CD4-positive, alpha-beta memory T cell (primary cell): ENCODE measurements at regions of chr6 and their contacts with region 1.

Region 1: GRCh38 chr6:154247119-154247861 is 109.3 kb downstream of the IPCEF1 start:
- DNase-seq: peak; percentile 50 to 64 (median 58)
- H3K4me3 ChIP-seq: peak overlapping the region; percentile 69 to 75
- H3K4me3 Mint-ChIP-seq: peak overlapping the region; percentile 89 to 99 (median 96)
- H3K27ac ChIP-seq: peak overlapping the region; percentile 87
- H3K27ac Mint-ChIP-seq: peak overlapping the region; percentile 89 to 97 (median 94)
- H3K4me1 ChIP-seq: peaks cover 75% of the 10 kb centered on the region
- H3K4me1 Mint-ChIP-seq: peaks cover 55 to 95% (median 74%) of the 10 kb centered on the region in 4 donors
- H3K27me3 ChIP-seq: no peaks in the 10 kb centered on the region
- H3K27me3 Mint-ChIP-seq: no peaks in the 10 kb centered on the region

Region 2: DNA sequence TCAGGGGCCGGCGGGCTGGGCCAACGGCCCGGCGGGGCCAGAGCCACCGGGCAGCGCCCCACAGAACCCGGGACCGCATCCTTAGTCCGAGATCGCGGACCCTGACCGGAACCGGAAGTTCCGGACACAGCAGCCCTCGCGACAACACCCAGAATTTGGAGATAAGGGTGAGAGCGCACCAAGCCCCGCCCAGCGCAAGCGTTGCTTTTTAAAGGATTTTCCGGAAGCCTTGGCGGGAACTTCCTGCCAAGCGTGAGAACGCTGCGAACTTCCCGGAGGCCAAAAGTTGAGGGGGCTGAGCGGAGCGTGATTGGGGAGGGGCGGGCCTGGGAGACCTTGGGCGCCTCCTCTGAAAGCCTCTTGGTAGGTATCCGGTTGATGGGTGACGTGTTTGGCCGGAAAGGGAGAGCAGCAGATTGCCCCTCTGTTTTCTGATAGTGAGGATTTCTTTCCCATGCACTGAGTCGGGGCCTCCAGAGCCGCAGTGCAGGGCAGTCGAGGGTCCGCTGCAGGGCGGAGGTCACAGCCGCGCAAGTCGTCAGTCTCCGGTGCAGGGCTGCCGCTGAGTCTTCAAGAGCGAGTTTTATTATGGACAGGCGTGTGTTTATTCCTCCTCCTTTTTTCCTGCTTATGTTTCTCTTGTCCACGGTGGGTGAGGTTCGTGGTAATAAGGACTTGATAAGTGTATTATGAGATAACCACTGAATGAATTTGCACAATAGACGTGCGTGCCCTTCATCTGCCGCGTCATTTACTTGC is 1244.5 kb before region 1 on chr6 and contains the start of gene MTRF1L:
- CTCF ChIA-PET with region 1: no interaction called
- POLR2A ChIA-PET with region 1: no interaction called
- intact Hi-C with region 1: loop called (anchors 10 kb)
- DNase-seq: peak; percentile 73 to 89 (median 77)
- H3K4me3 ChIP-seq: peak within 1 kb of the TSS; percentile 89 to 92
- H3K4me3 Mint-ChIP-seq: peak within 1 kb of the TSS; percentile 94 to 98 (median 96)
- H3K27ac ChIP-seq: peak within 1 kb of the TSS; percentile 82
- H3K27ac Mint-ChIP-seq: peak within 1 kb of the TSS; percentile 82 to 97 (median 94)
- H3K4me1 ChIP-seq: peaks cover 43% of the 10 kb centered on the region
- H3K4me1 Mint-ChIP-seq: peaks cover 34 to 48% (median 41%) of the 10 kb centered on the region in 4 donors
- H3K27me3 ChIP-seq: no peaks in the 10 kb centered on the region
- H3K27me3 Mint-ChIP-seq: no peaks in the 10 kb centered on the region
- total RNA-seq, gene MTRF1L: 17.3 to 18.3 TPM

Region 3: GRCh38 chr6:154156135-154156896 is 91.0 kb before region 1 on chr6:
- CTCF ChIA-PET with region 1: interaction called, 15 read pairs
- POLR2A ChIA-PET with region 1: interaction called, 31 read pairs
- intact Hi-C with region 1: loop called (anchors 1 kb)
- DNase-seq: peak; percentile 48 to 76 (median 56)
- H3K4me3 ChIP-seq: peak overlapping the region; percentile 32 to 46
- H3K4me3 Mint-ChIP-seq: peak overlapping the region; percentile 67 to 92 (median 84)
- H3K27ac ChIP-seq: peak overlapping the region; percentile 72
- H3K27ac Mint-ChIP-seq: peak overlapping the region; percentile 84 to 94 (median 93)
- H3K4me1 ChIP-seq: peaks cover 45% of the 10 kb centered on the region
- H3K4me1 Mint-ChIP-seq: peaks cover 38 to 66% (median 49%) of the 10 kb centered on the region in 4 donors
- H3K27me3 ChIP-seq: no peaks in the 10 kb centered on the region
- H3K27me3 Mint-ChIP-seq: no peaks in the 10 kb centered on the region

Region 4: GRCh38 chr6:154218301-154218700 is 29.0 kb before region 1 on chr6:
- CTCF ChIA-PET with region 1: interaction called, 3 read pairs
- POLR2A ChIA-PET with region 1: interaction called, 14 read pairs
- intact Hi-C with region 1: loop called (anchors 5 kb)
- DNase-seq: no peak
- H3K4me3 ChIP-seq: no peak overlapping the region
- H3K4me3 Mint-ChIP-seq: peak overlapping the region in 7 of 8 donors; percentile 25 to 85 (median 57)
- H3K27ac ChIP-seq: no peak overlapping the region
- H3K27ac Mint-ChIP-seq: peak overlapping the region; percentile 53 to 90 (median 81)
- H3K4me1 ChIP-seq: peaks cover 54% of the 10 kb centered on the region
- H3K4me1 Mint-ChIP-seq: peaks cover 38 to 53% (median 41%) of the 10 kb centered on the region in 4 donors
- H3K27me3 ChIP-seq: no peaks in the 10 kb centered on the region
- H3K27me3 Mint-ChIP-seq: no peaks in the 10 kb centered on the region

Region 5: DNA sequence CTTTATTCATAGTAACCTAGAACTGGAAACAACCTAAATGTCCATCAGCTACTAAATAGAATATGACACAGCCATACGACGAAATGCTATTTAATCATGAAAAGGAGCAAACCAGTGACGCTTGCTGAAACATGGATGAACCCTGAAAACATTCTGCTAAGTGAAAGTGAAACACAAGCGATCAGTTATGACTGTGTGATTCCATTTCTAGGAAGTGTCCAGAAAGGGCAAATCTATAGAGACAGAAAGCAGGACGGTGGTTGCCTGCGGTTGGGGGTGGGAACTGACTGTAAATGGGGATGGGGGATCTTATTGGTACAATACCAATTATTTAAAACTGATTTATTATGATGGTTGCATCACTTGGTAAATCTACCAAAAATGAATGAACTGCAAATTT is 17.5 kb before region 1 on chr6:
- CTCF ChIA-PET with region 1: interaction called, 27 read pairs
- POLR2A ChIA-PET with region 1: interaction called, 93 read pairs
- intact Hi-C with region 1: loop called (anchors 1 kb)
- DNase-seq: peak in 4 of 5 donors; percentile 39 to 70 (median 52)
- H3K4me3 ChIP-seq: peak overlapping the region; percentile 52 to 59
- H3K4me3 Mint-ChIP-seq: peak overlapping the region; percentile 86 to 95 (median 90)
- H3K27ac ChIP-seq: peak overlapping the region; percentile 42
- H3K27ac Mint-ChIP-seq: peak overlapping the region; percentile 89 to 96 (median 95)
- H3K4me1 ChIP-seq: peaks cover 75% of the 10 kb centered on the region
- H3K4me1 Mint-ChIP-seq: peaks cover 56 to 85% (median 74%) of the 10 kb centered on the region in 4 donors
- H3K27me3 ChIP-seq: no peaks in the 10 kb centered on the region
- H3K27me3 Mint-ChIP-seq: no peaks in the 10 kb centered on the region

Region 6: GRCh38 chr6:154267508-154268106 is 20.3 kb after region 1 on chr6:
- CTCF ChIA-PET with region 1: interaction called, 113 read pairs
- POLR2A ChIA-PET with region 1: interaction called, 36 read pairs
- intact Hi-C with region 1: loop called (anchors 2 kb)
- DNase-seq: peak in 1 of 5 donors; percentile 16
- H3K4me3 ChIP-seq: no peak overlapping the region
- H3K4me3 Mint-ChIP-seq: peak overlapping the region in 7 of 8 donors; percentile 48 to 74 (median 66)
- H3K27ac ChIP-seq: no peak overlapping the region
- H3K27ac Mint-ChIP-seq: peak overlapping the region in 5 of 7 donors; percentile 27 to 89 (median 58)
- H3K4me1 ChIP-seq: peaks cover 26% of the 10 kb centered on the region
- H3K4me1 Mint-ChIP-seq: peaks cover 17 to 24% (median 20%) of the 10 kb centered on the region in 4 donors
- H3K27me3 ChIP-seq: no peaks in the 10 kb centered on the region
- H3K27me3 Mint-ChIP-seq: no peaks in the 10 kb centered on the region

Region 7: DNA sequence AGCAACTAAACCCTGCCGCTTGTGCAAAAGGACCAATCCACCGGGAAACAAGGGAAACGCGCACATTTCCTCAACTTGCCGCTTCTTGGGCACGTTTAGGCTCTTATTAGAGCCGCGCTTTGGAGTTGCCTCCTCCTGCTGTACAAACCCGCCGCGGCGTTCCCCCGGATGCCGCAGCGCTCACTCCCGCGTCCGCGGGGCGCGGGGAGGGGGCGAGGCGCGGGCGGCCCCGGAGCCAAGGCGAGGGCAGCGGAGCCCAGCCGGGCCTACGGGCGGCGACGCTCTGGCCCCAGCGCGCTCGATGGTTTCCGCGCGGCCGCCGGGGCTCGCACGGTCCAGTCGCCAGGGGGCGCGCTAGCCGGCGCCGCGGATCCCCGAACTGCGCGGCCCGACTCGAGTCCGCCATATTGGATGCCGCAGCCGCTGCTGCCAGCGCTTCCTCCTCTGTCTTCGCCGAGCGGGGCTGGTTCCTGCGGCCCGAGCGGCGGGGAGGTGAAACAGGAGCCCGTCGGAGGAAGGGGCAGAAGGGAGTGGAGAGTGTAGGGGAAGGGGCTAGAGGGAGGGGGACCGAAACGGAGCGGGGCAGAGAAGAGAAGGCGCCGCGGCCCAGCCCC is 485.8 kb after region 1 on chr6 and contains the start of gene SCAF8:
- CTCF ChIA-PET with region 1: no interaction called
- POLR2A ChIA-PET with region 1: no interaction called
- intact Hi-C with region 1: loop called (anchors 10 kb)
- DNase-seq: peak; percentile 77 to 93 (median 88)
- H3K4me3 ChIP-seq: peak within 1 kb of the TSS; percentile 63 to 68
- H3K4me3 Mint-ChIP-seq: peak within 1 kb of the TSS; percentile 87 to 95 (median 90)
- H3K27ac ChIP-seq: peak within 1 kb of the TSS; percentile 91
- H3K27ac Mint-ChIP-seq: peak within 1 kb of the TSS; percentile 82 to 98 (median 95)
- H3K4me1 ChIP-seq: peaks cover 45% of the 10 kb centered on the region
- H3K4me1 Mint-ChIP-seq: peaks cover 26 to 48% (median 36%) of the 10 kb centered on the region in 4 donors
- H3K27me3 ChIP-seq: no peaks in the 10 kb centered on the region
- H3K27me3 Mint-ChIP-seq: no peaks in the 10 kb centered on the region
- total RNA-seq, gene SCAF8: 59.9 to 60.5 TPM